ENCODE measurements at regions of chr12 and their contacts with region 1.

Region 1: DNA sequence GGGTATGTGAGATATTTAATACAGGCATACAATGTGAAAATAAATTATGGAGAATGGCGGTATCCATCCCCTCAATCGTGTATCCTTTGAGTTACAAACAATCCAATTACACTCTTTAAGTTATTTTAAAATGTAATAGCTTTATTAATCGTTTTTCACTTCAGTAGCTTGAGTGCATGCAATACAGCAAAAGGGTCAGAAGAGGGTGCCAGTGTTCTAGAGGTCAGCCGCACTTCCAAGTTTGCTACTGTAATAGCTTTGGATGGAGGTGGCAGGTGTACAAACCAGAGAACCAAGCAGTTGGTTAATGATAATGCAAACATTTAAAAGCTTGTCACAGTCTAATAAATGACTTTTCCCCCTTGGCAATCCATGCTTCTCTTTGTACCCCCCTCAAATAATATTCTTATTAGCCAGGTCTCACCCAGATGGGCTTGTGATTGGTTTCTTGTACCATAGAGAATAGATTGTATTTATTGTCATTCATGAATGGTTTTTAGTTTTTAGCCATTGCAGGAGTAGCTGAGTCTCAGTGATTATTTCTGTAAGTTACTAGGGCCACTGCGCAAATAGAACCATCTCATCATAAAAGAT is 127.0 kb downstream of the ERC1 start:
- DNase-seq: peak; percentile 74
- H3K4me3 Mint-ChIP-seq: no peak overlapping the region
- H3K27ac Mint-ChIP-seq: no peak overlapping the region
- H3K4me1 Mint-ChIP-seq: peaks cover 18% of the 10 kb centered on the region
- H3K27me3 Mint-ChIP-seq: no peaks in the 10 kb centered on the region

Region 2: GRCh38 chr12:902581-902980 is 215.5 kb before region 1 on chr12:
- CTCF ChIA-PET with region 1: no interaction called
- POLR2A ChIA-PET with region 1: no interaction called
- DNase-seq: no peak
- H3K4me3 Mint-ChIP-seq: no peak overlapping the region
- H3K27ac Mint-ChIP-seq: no peak overlapping the region
- H3K4me1 Mint-ChIP-seq: peaks cover 30% of the 10 kb centered on the region
- H3K27me3 Mint-ChIP-seq: no peaks in the 10 kb centered on the region

Region 3: DNA sequence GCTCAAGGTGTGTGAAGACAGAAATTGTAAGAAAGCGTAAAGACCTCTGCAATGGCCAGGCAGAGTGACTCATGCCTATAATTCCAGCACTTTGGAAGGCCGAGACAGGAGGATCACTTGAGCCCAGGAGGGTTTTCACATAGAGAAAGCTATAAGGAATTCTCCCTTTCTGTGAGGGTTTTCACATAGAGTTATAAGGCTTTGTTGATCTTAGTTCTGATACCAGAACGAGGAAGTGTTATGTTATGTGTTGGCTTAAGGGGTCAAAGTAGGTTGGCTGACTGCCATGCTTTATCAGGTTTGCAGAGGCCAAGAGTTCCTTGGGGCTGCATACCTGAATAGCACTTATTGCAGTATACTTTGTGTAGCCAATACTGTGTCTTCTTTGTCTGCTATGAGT is 12.1 kb after region 1 on chr12:
- CTCF ChIA-PET with region 1: interaction called, 14 read pairs
- POLR2A ChIA-PET with region 1: interaction called, 3 read pairs
- DNase-seq: no peak
- H3K4me3 Mint-ChIP-seq: no peak overlapping the region
- H3K27ac Mint-ChIP-seq: no peak overlapping the region
- H3K4me1 Mint-ChIP-seq: peaks cover 21% of the 10 kb centered on the region
- H3K27me3 Mint-ChIP-seq: no peaks in the 10 kb centered on the region

Region 4: GRCh38 chr12:1339618-1340319 is 221.7 kb after region 1 on chr12:
- CTCF ChIA-PET with region 1: no interaction called
- POLR2A ChIA-PET with region 1: no interaction called
- DNase-seq: no peak
- H3K4me3 Mint-ChIP-seq: no peak overlapping the region
- H3K27ac Mint-ChIP-seq: no peak overlapping the region
- H3K4me1 Mint-ChIP-seq: no peaks in the 10 kb centered on the region
- H3K27me3 Mint-ChIP-seq: no peaks in the 10 kb centered on the region

Region 5: DNA sequence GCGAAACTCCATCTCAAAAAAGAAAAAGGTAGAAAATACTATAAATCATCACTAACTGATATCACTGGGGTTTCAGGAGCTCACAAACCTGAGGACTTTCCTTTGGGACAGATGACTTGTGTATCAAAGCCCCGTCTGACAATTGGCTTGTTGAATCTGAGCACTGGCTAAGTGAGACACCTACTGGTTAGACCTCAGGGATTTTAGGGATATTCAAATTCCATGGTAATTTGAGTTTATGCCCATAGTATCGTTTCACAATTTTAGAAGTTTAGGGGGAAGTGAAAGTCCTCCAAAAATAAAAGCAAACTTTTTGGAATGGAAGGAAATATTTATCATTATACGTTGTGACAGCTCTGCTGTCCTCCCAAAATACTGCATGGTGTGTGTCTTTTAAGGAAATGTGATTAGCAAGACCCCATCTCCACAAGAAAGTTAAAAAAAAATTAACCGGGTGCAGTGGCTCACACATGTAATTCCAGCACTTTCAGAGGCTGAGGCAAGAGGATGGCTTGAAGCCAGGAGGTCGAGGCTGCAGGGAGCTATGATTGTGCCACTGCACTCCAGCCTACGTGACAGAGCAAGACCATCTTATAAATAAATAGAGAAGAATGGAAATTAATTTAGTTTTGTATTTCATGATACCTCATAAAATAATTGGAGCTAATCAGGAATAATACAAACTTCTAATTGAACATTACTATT is 427.1 kb after region 1 on chr12:
- CTCF ChIA-PET with region 1: interaction called, 13 read pairs
- POLR2A ChIA-PET with region 1: no interaction called
- DNase-seq: no peak
- H3K4me3 Mint-ChIP-seq: no peak overlapping the region
- H3K27ac Mint-ChIP-seq: no peak overlapping the region
- H3K4me1 Mint-ChIP-seq: no peaks in the 10 kb centered on the region
- H3K27me3 Mint-ChIP-seq: peaks cover 45% of the 10 kb centered on the region

Region 6: GRCh38 chr12:1594261-1595025 is 476.4 kb after region 1 on chr12 and contains the start of gene FBXL14:
- CTCF ChIA-PET with region 1: interaction called, 18 read pairs
- POLR2A ChIA-PET with region 1: interaction called, 5 read pairs
- DNase-seq: peak; percentile 91
- H3K4me3 Mint-ChIP-seq: peak within 1 kb of the TSS; percentile 93
- H3K27ac Mint-ChIP-seq: peak within 1 kb of the TSS; percentile 95
- H3K4me1 Mint-ChIP-seq: peaks cover 48% of the 10 kb centered on the region
- H3K27me3 Mint-ChIP-seq: no peaks in the 10 kb centered on the region
- total RNA-seq, gene FBXL14: 30.3 to 30.9 TPM

Region 7: GRCh38 chr12:1634590-1635191 is 516.6 kb after region 1 on chr12:
- CTCF ChIA-PET with region 1: interaction called, 11 read pairs
- POLR2A ChIA-PET with region 1: no interaction called
- DNase-seq: peak; percentile 68
- H3K4me3 Mint-ChIP-seq: no peak overlapping the region
- H3K27ac Mint-ChIP-seq: no peak overlapping the region
- H3K4me1 Mint-ChIP-seq: peaks cover 9% of the 10 kb centered on the region
- H3K27me3 Mint-ChIP-seq: peaks cover 61% of the 10 kb centered on the region